Colonic mucosa (tissue), 4 donors: ENCODE measurements at regions of chr7 and their contacts with region 1.

Region 1: GRCh38 chr7:81430150-81430549 is 339.7 kb downstream of the HGF start:
- DNase-seq: no peak
- H3K4me3 ChIP-seq: no peak overlapping the region
- H3K27ac ChIP-seq: no peak overlapping the region
- H3K4me1 ChIP-seq: no peaks in the 10 kb centered on the region
- H3K27me3 ChIP-seq: no peaks in the 10 kb centered on the region
- CTCF ChIP-seq: no peak

Region 2: DNA sequence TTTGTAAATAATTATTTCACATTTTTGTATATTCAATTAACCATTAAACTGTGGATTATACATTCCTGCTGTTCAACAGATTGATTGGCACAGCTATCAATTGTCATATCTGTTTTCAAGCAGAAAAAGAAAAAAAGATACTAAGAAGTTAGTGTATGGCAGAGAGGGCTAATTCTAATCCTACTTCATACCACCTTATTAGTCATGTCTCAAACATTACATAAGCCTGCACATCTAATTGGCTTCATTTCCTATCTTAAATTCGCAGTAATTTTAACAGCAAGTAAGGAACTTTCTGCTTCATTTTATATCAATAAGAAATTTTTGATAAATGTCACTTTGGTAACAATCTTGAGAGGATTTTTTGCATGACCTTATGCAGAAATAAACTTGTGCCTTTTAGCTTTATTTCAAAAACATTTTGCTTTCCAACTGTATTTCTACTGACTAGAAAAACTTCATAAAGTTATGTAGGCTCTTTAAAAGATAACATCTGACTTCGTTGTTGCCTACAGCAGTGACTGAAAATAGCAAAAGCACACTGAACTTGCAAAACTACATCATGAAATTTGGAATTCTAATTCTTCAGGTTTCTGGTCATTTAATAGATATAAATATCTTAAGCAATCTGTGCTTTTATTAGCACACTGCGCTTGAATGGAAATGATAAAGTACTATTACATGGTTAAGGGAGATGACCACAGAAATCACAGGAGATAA is 622.8 kb before region 1 on chr7:
- intact Hi-C with region 1: loop called (anchors 5 kb)
- DNase-seq: no peak
- H3K4me3 ChIP-seq: no peak overlapping the region
- H3K27ac ChIP-seq: no peak overlapping the region
- H3K4me1 ChIP-seq: no peaks in the 10 kb centered on the region
- H3K27me3 ChIP-seq: no peaks in the 10 kb centered on the region
- CTCF ChIP-seq: no peak